Right cardiac atrium (tissue), 5 donors: ENCODE measurements at regions of chr2 and their contacts with region 1.

Region 1: DNA sequence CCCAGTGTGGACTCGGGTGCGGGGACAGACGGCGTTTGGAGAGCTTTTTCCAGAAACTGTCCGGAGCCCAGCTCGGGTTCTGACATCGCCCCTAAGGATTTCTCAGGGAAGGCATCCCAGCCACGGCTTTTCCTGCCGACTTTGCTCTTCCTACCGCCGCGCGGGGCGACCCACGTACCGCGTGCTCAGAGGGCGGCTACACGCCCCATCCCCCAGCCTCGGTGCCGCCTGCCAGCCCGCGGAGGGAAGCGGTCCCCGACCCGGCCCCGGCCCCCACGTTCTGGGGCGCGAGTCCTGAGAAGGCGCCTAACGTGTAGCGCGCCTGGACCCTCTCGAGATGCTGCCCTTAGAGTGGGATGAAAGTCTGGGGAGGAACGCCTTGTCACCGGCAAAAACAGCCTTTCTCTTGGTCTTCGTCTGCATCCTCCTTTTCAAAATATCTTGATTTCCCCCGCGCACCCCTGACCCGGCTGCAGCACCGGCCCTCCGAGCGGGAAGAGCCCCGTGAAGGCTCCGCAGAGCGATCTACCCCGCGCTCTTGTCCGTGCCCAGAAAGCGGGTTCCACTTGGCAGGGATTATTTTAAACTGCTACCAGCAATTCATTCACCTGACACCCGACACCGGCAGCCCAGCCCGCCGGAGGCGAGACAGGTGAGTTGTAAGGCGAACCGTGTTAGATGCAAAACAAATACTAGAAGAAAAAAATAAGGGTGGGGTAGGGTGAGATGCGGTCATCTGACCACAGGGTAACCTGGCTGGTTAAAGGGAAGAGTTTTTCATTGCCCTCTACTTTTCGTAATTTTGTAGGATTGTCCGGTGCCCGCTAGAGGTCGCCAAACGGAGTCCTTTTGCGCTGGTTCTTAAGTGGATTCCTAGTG is 812 bp upstream of the KCNG3 start:
- DNase-seq: peak; percentile 61 to 78 (median 72)
- ATAC-seq: peak; percentile 61 to 72
- H3K4me3 ChIP-seq: peak overlapping the region; percentile 63
- H3K27ac ChIP-seq: no peak overlapping the region
- H3K4me1 ChIP-seq: peaks cover 3% of the 10 kb centered on the region
- H3K27me3 ChIP-seq: no peaks in the 10 kb centered on the region

Region 2: GRCh38 chr2:42663106-42663780 is 168.6 kb after region 1 on chr2:
- intact Hi-C with region 1: loop called (anchors 5 to 10 kb)
- DNase-seq: peak; percentile 44 to 77 (median 66)
- ATAC-seq: peak; percentile 83 to 88
- H3K4me3 ChIP-seq: no peak overlapping the region
- H3K27ac ChIP-seq: no peak overlapping the region
- H3K4me1 ChIP-seq: no peaks in the 10 kb centered on the region
- H3K27me3 ChIP-seq: no peaks in the 10 kb centered on the region